GM12878 (cell line): ENCODE measurements at regions of chr12 and their contacts with region 1.

Region 1: DNA sequence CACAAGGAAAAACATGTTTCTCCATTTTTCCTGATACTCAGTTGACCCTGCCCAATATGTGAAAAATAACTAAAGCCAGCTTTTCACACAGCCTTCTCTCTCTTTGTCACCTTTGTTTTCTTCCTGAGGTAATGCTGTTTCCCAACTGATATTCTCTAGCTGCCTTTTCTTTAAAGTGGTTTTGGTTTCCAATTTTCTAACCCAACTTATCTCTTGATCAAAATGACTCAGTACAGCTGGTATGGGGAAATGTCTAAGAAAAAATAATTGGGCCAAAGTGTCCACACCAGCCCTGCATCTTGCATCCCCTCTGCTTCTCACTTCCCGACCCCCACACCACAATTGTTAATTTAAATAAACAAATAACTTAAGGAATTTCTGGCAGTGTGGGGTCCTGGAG is 193.8 kb downstream of the SYT1 start:
- DNase-seq: no peak
- ATAC-seq: peak; percentile 72
- H3K4me3 ChIP-seq: no peak overlapping the region
- H3K27ac ChIP-seq: no peak overlapping the region
- H3K4me1 ChIP-seq: no peaks in the 10 kb centered on the region
- H3K27me3 ChIP-seq: no peaks in the 10 kb centered on the region
- CTCF ChIP-seq: no peak
- EP300 ChIP-seq: peak; percentile 22 to 42; a peak in 1 of 4 replicates
- POLR2A ChIP-seq: no peak
- RAD21 ChIP-seq: no peak

Region 2: GRCh38 chr12:78406828-78407227 is 651.5 kb before region 1 on chr12:
- CTCF ChIA-PET with region 1: no interaction called
- POLR2A ChIA-PET with region 1: interaction called, 11 read pairs
- RAD21 ChIA-PET with region 1: no interaction called
- SMC1A ChIA-PET with region 1: no interaction called
- in situ Hi-C with region 1: no loop called
- intact Hi-C with region 1: no loop called
- DNase-seq: peak; percentile 5
- ATAC-seq: peak; percentile 97
- H3K4me3 ChIP-seq: no peak overlapping the region
- H3K27ac ChIP-seq: 0 out of 2 replicates have a peak overlapping the region, but pooled peaks have one; percentile 4
- H3K4me1 ChIP-seq: no peaks in the 10 kb centered on the region; the same call in 1 of the 2 replicates
- H3K27me3 ChIP-seq: no peaks in the 10 kb centered on the region
- CTCF ChIP-seq: no peak
- EP300 ChIP-seq: no peak
- POLR2A ChIP-seq: no peak
- RAD21 ChIP-seq: no peak

Region 3: DNA sequence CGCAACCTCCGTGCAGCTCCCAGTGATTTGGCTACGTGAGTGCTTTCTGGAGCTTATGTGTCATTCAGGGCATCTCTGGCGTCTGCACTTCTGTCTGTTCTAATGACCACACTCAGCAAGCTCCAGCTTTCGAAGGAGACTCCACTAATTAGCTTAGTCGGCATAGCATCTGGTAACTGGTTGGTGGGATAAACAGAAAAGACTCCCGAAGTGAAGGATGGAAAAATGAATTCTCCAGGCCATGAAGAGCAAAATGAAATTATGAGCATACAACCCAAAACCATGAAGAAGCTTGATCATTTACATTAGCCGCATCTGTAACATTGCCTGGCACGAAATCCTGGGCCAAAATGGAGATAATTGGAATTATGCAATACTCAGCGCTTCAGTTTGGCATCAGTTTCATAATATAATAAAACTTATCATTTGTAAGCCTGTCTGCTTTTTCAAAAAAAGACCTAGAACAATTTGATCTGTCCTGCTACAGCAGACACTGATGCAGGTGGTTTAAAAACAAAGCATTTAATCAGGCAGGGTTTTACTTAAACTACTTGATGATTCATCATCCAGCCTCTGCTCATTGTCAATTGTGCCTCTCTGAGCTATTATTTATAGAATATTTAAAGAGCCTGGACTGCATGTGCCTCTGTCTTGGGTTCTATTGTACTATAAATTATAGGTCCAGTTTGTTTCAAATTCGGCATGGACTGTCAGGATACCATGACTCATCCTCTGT is 106.4 kb before region 1 on chr12:
- CTCF ChIA-PET with region 1: no interaction called
- POLR2A ChIA-PET with region 1: no interaction called
- RAD21 ChIA-PET with region 1: no interaction called
- SMC1A ChIA-PET with region 1: no interaction called
- in situ Hi-C with region 1: no loop called
- intact Hi-C with region 1: no loop called
- DNase-seq: no peak
- ATAC-seq: no peak
- H3K4me3 ChIP-seq: no peak overlapping the region
- H3K27ac ChIP-seq: no peak overlapping the region
- H3K4me1 ChIP-seq: no peaks in the 10 kb centered on the region
- H3K27me3 ChIP-seq: no peaks in the 10 kb centered on the region
- CTCF ChIP-seq: no peak
- EP300 ChIP-seq: no peak
- POLR2A ChIP-seq: no peak
- RAD21 ChIP-seq: no peak

Region 4: DNA sequence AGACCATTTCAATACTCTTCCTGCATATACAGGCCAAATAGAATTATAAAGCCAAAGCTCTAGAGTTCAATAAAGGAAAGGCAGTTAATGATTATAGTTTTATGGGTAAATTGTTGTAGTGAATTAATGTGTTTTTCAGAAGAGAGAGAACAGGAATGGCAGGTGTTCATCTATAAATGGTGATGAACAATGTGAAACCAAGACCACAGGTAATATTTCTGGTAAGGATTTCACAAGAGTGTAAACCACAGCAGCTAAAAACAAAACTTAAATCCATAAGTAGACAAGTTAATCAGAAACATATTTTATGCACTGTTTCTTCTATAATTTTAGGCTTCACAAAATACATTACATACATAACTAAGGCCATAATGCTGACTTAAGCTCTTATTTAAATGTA is 10.7 kb after region 1 on chr12:
- CTCF ChIA-PET with region 1: interaction called, 21 read pairs
- POLR2A ChIA-PET with region 1: interaction called, 7 read pairs
- RAD21 ChIA-PET with region 1: interaction called, 25 read pairs
- SMC1A ChIA-PET with region 1: interaction called, 41 read pairs
- in situ Hi-C with region 1: no loop called
- intact Hi-C with region 1: no loop called
- DNase-seq: peak; percentile 45
- ATAC-seq: peak; percentile 87
- H3K4me3 ChIP-seq: no peak overlapping the region
- H3K27ac ChIP-seq: peak overlapping the region; percentile 24; the same call in 1 of the 2 replicates
- H3K4me1 ChIP-seq: peaks cover 5% of the 10 kb centered on the region; the same call in 1 of the 2 replicates
- H3K27me3 ChIP-seq: no peaks in the 10 kb centered on the region
- CTCF ChIP-seq: no peak
- EP300 ChIP-seq: peak; percentile 92 to 97
- POLR2A ChIP-seq: no peak
- RAD21 ChIP-seq: no peak

Region 5: DNA sequence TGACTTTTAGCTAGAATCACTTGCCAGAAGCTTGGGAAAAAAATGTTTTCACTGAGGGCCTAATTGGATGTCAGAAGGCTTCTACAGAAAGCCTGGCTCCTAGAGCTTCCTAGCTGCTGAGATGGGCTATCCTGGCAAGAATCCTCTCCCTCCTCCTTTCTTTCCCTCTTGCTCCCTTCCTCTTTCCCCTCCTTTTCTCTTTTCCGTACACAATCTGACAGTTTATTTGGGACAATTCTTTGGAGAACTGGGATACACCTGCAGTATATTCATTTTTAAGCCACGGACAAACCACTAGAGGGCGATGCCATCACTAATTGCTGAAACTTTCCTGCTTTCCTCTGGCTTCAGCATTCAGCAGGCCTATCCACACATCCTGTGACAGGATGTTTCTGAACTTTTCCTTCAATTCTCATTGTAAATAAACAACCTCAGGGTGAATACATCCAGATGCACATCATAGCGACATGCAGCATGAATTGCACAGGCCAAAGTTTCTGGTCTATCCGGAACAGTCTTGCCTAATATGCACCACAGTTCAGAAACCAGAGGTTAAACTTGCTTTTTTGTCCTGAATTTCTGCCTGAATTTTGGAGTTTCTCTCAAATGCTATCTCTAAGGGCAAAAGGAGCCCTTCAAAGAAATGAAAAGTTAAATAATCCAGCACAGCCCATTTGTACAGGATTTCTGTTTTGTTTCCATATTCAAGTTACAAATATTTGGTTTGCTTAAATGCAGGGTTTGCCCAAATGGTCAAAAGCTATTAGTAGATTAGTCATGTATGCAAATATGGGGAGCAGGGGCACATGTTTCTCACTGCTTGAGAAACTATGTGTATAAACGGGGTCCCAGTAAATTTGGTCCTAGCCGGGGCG is 489.6 kb after region 1 on chr12:
- CTCF ChIA-PET with region 1: no interaction called
- POLR2A ChIA-PET with region 1: no interaction called
- RAD21 ChIA-PET with region 1: no interaction called
- SMC1A ChIA-PET with region 1: no interaction called
- in situ Hi-C with region 1: no loop called
- intact Hi-C with region 1: no loop called
- DNase-seq: peak; percentile 9
- ATAC-seq: peak; percentile 88
- H3K4me3 ChIP-seq: no peak overlapping the region
- H3K27ac ChIP-seq: no peak overlapping the region
- H3K4me1 ChIP-seq: no peaks in the 10 kb centered on the region
- H3K27me3 ChIP-seq: no peaks in the 10 kb centered on the region
- CTCF ChIP-seq: peak; percentile 69 to 74 (median 71)
- EP300 ChIP-seq: no peak
- POLR2A ChIP-seq: no peak
- RAD21 ChIP-seq: peak; percentile 74